Caco-2 (cell line): ENCODE measurements at regions of chr19 and their contacts with region 1.

Region 1: DNA sequence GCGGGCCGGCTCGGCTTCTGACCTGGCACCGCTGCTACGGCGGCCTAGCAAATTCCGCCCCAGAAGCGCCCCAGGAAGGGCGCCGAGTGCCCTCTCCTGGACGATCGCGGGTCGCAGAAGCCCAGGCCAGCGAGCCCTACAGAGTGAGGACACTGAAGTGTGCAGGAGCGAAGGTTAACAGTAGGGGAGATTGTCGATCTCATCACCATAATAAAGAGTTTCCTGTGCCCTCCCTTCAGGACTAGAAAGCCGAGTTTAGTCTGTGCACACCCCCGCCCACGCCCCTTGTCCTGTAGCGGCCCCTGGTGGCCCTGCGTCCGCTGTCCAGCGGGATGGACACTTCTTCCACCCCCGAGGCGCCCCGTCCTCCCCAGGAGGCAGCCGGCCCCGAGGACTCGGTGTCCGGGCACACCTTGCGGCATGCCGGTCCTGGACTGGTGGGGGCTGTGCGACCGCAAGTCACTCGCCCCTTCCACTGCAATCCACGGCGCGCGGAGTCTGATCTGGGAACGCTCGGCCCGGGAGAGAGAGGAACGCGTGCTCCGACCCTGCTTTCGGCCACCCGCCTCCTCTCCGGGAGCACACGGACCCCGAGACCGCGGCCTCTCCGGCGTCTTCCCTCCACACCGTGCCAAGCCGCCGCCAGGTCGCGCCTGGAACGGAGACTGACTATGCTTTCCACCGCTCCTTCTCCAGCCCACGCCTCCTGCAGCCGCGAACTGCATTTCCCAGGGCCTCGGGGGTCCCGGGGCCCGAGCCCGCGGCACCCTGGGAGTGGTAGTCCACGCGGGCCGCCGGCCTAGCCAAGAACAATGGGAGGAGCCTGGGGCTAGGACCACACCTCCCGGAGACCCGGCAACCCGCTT is 769 bp upstream of the KMT2B start:
- DNase-seq: peak; percentile 95 to 98
- H3K4me3 ChIP-seq: peak overlapping the region; percentile 91
- H3K4me3 Mint-ChIP-seq: peak overlapping the region; percentile 81
- H3K27ac Mint-ChIP-seq: peak overlapping the region; percentile 82
- H3K4me1 ChIP-seq: peaks cover 8% of the 10 kb centered on the region
- H3K4me1 Mint-ChIP-seq: peaks cover 16% of the 10 kb centered on the region
- H3K27me3 ChIP-seq: no peaks in the 10 kb centered on the region
- H3K27me3 Mint-ChIP-seq: no peaks in the 10 kb centered on the region
- CTCF ChIP-seq: peak; percentile 89 to 94

Region 2: GRCh38 chr19:35545001-35545911 is 171.8 kb before region 1 on chr19 and contains the start of gene TMEM147:
- CTCF ChIA-PET with region 1: no interaction called
- POLR2A ChIA-PET with region 1: no interaction called
- intact Hi-C with region 1: loop called (anchors 1 kb)
- DNase-seq: peak; percentile 91 to 96
- H3K4me3 ChIP-seq: peak within 1 kb of the TSS; percentile 90
- H3K4me3 Mint-ChIP-seq: peak within 1 kb of the TSS; percentile 95
- H3K27ac Mint-ChIP-seq: peak within 1 kb of the TSS; percentile 91
- H3K4me1 ChIP-seq: peaks cover 14% of the 10 kb centered on the region
- H3K4me1 Mint-ChIP-seq: peaks cover 24% of the 10 kb centered on the region
- H3K27me3 ChIP-seq: no peaks in the 10 kb centered on the region
- H3K27me3 Mint-ChIP-seq: no peaks in the 10 kb centered on the region
- CTCF ChIP-seq: no peak
- total RNA-seq, gene TMEM147: 126 and 140 TPM in 2 replicates

Region 3: GRCh38 chr19:35609851-35610353 is 107.1 kb before region 1 on chr19:
- CTCF ChIA-PET with region 1: no interaction called
- POLR2A ChIA-PET with region 1: no interaction called
- intact Hi-C with region 1: no loop called
- DNase-seq: no peak
- H3K4me3 ChIP-seq: no peak overlapping the region
- H3K4me3 Mint-ChIP-seq: no peak overlapping the region
- H3K27ac Mint-ChIP-seq: no peak overlapping the region
- H3K4me1 ChIP-seq: 0 out of 2 replicates have a peak, but pooled peaks cover 4% of the 10 kb centered on the region
- H3K4me1 Mint-ChIP-seq: peaks cover 10% of the 10 kb centered on the region
- H3K27me3 ChIP-seq: no peaks in the 10 kb centered on the region
- H3K27me3 Mint-ChIP-seq: no peaks in the 10 kb centered on the region
- CTCF ChIP-seq: no peak

Region 4: GRCh38 chr19:35648017-35648961 is 68.7 kb before region 1 on chr19 and contains the start of gene COX6B1:
- CTCF ChIA-PET with region 1: no interaction called
- POLR2A ChIA-PET with region 1: no interaction called
- intact Hi-C with region 1: loop called (anchors 5 kb)
- DNase-seq: peak; percentile 95 to 97
- H3K4me3 ChIP-seq: peak within 1 kb of the TSS; percentile 62
- H3K4me3 Mint-ChIP-seq: peak within 1 kb of the TSS; percentile 97
- H3K27ac Mint-ChIP-seq: peak within 1 kb of the TSS; percentile 90
- H3K4me1 ChIP-seq: peaks cover 15% of the 10 kb centered on the region
- H3K4me1 Mint-ChIP-seq: peaks cover 12% of the 10 kb centered on the region
- H3K27me3 ChIP-seq: no peaks in the 10 kb centered on the region
- H3K27me3 Mint-ChIP-seq: no peaks in the 10 kb centered on the region
- CTCF ChIP-seq: no peak
- total RNA-seq, gene COX6B1: 551 and 639 TPM in 2 replicates

Region 5: DNA sequence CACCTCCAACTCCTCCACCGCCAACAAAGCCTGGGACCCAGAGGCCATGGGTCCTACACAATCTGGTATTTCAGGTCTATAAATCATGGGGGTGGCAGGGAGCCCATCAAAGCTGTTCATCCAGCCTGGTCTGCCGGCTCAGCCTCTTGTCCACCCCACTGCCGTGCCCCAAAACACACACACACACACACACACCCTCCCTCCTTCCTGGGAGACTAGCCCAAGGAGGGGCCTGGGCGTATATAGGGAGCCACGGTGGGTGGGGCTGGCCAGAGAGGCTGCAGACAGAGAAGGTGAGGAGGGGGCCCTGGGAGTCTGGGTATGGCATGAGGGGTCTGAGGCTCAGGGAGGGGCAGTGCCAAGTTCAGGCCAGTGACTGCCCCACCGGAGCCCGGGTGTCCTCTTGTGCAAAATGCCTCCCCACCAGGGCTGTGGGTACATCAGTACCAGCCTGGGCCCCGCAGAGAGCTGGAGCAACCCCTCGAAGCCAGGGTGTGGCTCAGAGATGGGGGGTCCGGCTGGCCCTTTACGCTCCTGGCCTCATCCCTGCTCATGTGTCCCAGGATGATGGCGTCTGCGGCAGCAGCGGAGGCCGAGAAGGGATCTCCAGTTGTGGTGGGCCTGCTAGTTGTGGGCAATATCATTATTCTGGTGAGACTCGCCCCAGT is 50.7 kb before region 1 on chr19 and contains the start of gene UPK1A:
- CTCF ChIA-PET with region 1: no interaction called
- POLR2A ChIA-PET with region 1: no interaction called
- intact Hi-C with region 1: no loop called
- DNase-seq: peak in 1 of 2 experiments; percentile 30
- H3K4me3 ChIP-seq: no peak within 1 kb of the TSS
- H3K4me3 Mint-ChIP-seq: no peak within 1 kb of the TSS
- H3K27ac Mint-ChIP-seq: no peak within 1 kb of the TSS
- H3K4me1 ChIP-seq: peaks cover 3% of the 10 kb centered on the region; the same call in 1 of the 2 replicates
- H3K4me1 Mint-ChIP-seq: peaks cover 6% of the 10 kb centered on the region
- H3K27me3 ChIP-seq: no peaks in the 10 kb centered on the region
- H3K27me3 Mint-ChIP-seq: peaks cover 5% of the 10 kb centered on the region
- CTCF ChIP-seq: no peak
- total RNA-seq, gene UPK1A: not detected in 2 replicates

Region 6: GRCh38 chr19:35702223-35703012 is 14.6 kb before region 1 on chr19:
- CTCF ChIA-PET with region 1: interaction called, 5 read pairs
- POLR2A ChIA-PET with region 1: no interaction called
- intact Hi-C with region 1: loop called (anchors 1 kb)
- DNase-seq: peak; percentile 95 to 98
- H3K4me3 ChIP-seq: peak overlapping the region; percentile 71
- H3K4me3 Mint-ChIP-seq: peak overlapping the region; percentile 82
- H3K27ac Mint-ChIP-seq: peak overlapping the region; percentile 64
- H3K4me1 ChIP-seq: no peaks in the 10 kb centered on the region
- H3K4me1 Mint-ChIP-seq: peaks cover 6% of the 10 kb centered on the region
- H3K27me3 ChIP-seq: no peaks in the 10 kb centered on the region
- H3K27me3 Mint-ChIP-seq: peaks cover 3% of the 10 kb centered on the region
- CTCF ChIP-seq: no peak

Region 7: GRCh38 chr19:35748106-35749020 is 31.3 kb after region 1 on chr19 and contains the start of gene LIN37:
- CTCF ChIA-PET with region 1: no interaction called
- POLR2A ChIA-PET with region 1: no interaction called
- intact Hi-C with region 1: loop called (anchors 1 kb)
- DNase-seq: peak; percentile 99
- H3K4me3 ChIP-seq: peak within 1 kb of the TSS; percentile 58
- H3K4me3 Mint-ChIP-seq: peak within 1 kb of the TSS; percentile 89
- H3K27ac Mint-ChIP-seq: peak within 1 kb of the TSS; percentile 71
- H3K4me1 ChIP-seq: peaks cover 7% of the 10 kb centered on the region
- H3K4me1 Mint-ChIP-seq: peaks cover 18% of the 10 kb centered on the region
- H3K27me3 ChIP-seq: no peaks in the 10 kb centered on the region
- H3K27me3 Mint-ChIP-seq: no peaks in the 10 kb centered on the region
- CTCF ChIP-seq: no peak
- total RNA-seq, gene LIN37: 8.1 and 10.2 TPM in 2 replicates

Region 8: GRCh38 chr19:35759697-35760096 is 42.7 kb after region 1 on chr19:
- CTCF ChIA-PET with region 1: no interaction called
- POLR2A ChIA-PET with region 1: no interaction called
- intact Hi-C with region 1: no loop called
- DNase-seq: no peak
- H3K4me3 ChIP-seq: no peak overlapping the region
- H3K4me3 Mint-ChIP-seq: peak overlapping the region; percentile 88
- H3K27ac Mint-ChIP-seq: no peak overlapping the region
- H3K4me1 ChIP-seq: peaks cover 6% of the 10 kb centered on the region
- H3K4me1 Mint-ChIP-seq: peaks cover 6% of the 10 kb centered on the region
- H3K27me3 ChIP-seq: no peaks in the 10 kb centered on the region
- H3K27me3 Mint-ChIP-seq: no peaks in the 10 kb centered on the region
- CTCF ChIP-seq: no peak